Lower leg skin (tissue), 4 donors: ENCODE measurements at regions of chr2 and their contacts with region 1.

Region 1: GRCh38 chr2:118992740-118993391 is 50.9 kb downstream of the MARCO start:
- DNase-seq: peak; percentile 2 to 58
- H3K4me3 ChIP-seq: no peak overlapping the region
- CTCF ChIP-seq: no peak
- POLR2A ChIP-seq: no peak

Region 2: GRCh38 chr2:118169359-118170007 is 823.4 kb before region 1 on chr2:
- intact Hi-C with region 1: loop called (anchors 5 kb)
- DNase-seq: peak; percentile 34 to 87
- H3K4me3 ChIP-seq: no peak overlapping the region
- CTCF ChIP-seq: no peak
- POLR2A ChIP-seq: no peak

Region 3: DNA sequence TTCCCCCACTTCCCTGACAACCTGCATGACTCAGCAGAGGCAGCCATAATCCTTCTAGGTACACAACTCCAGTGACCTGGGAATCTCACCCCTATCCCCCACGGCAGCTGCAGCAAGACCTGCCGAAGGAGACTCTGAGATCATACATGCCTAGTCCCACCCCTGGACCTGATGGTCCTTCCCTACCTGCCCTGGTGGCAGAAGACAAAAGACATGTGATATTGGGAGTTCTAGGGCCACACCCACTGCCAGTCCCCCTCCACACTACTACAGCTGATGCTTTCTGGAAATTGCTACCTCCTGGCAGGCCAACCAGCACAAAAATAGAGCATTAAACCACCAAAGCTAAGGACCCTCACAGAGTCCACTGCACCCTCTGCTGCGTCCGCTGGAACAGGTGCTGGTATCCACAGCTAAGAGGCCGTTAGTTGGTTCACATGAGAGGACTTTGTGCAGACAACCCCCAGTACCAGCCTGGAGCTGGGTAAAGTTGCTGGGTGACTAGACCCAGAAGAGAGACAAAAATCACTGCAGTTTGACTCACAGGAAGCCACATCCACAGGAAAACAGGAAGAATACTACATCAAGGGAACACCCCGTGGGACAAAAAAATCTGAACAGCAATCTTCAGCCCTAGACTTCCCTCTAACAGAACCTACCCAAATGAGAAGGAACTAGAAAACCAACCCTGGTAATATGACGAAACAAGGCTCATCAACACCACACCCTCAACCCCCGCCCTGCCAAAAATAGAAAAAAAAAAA is 38.4 kb before region 1 on chr2:
- intact Hi-C with region 1: no loop called
- DNase-seq: peak in 1 of 2 donors; percentile 72
- H3K4me3 ChIP-seq: no peak overlapping the region
- CTCF ChIP-seq: no peak
- POLR2A ChIP-seq: no peak

Region 4: GRCh38 chr2:119517433-119517832 is 524.6 kb after region 1 on chr2:
- intact Hi-C with region 1: no loop called
- DNase-seq: peak; percentile 19 to 84
- H3K4me3 ChIP-seq: no peak overlapping the region
- CTCF ChIP-seq: no peak
- POLR2A ChIP-seq: no peak